Heart left ventricle (tissue), 16 donors: ENCODE measurements at regions of chr1 and their contacts with region 1.

Region 1: GRCh38 chr1:246753670-246754535 is 29.7 kb downstream of the SCCPDH start:
- DNase-seq: peak in 4 of 5 donors; percentile 38 to 49 (median 46)
- ATAC-seq: peak in 3 of 4 donors; percentile 72 to 84 (median 82)
- H3K4me3 ChIP-seq: no peak overlapping the region
- H3K27ac ChIP-seq: no peak overlapping the region
- H3K4me1 ChIP-seq: no peaks in the 10 kb centered on the region
- H3K27me3 ChIP-seq: no peaks in the 10 kb centered on the region
- CTCF ChIP-seq: peak; percentile 56 to 78 (median 72)
- POLR2A ChIP-seq: no peak

Region 2: GRCh38 chr1:246497331-246497915 is 256.5 kb before region 1 on chr1:
- intact Hi-C with region 1: loop called in 8 of 10 experiments (anchors 2 to 10 kb)
- DNase-seq: no peak
- ATAC-seq: peak in 1 of 4 donors; percentile 31
- H3K4me3 ChIP-seq: no peak overlapping the region
- H3K27ac ChIP-seq: no peak overlapping the region
- H3K4me1 ChIP-seq: peaks cover 0 to 3% (median under 1%) of the 10 kb centered on the region in 12 donors
- H3K27me3 ChIP-seq: no peaks in the 10 kb centered on the region
- CTCF ChIP-seq: peak; percentile 61 to 83 (median 72)
- POLR2A ChIP-seq: no peak

Region 3: DNA sequence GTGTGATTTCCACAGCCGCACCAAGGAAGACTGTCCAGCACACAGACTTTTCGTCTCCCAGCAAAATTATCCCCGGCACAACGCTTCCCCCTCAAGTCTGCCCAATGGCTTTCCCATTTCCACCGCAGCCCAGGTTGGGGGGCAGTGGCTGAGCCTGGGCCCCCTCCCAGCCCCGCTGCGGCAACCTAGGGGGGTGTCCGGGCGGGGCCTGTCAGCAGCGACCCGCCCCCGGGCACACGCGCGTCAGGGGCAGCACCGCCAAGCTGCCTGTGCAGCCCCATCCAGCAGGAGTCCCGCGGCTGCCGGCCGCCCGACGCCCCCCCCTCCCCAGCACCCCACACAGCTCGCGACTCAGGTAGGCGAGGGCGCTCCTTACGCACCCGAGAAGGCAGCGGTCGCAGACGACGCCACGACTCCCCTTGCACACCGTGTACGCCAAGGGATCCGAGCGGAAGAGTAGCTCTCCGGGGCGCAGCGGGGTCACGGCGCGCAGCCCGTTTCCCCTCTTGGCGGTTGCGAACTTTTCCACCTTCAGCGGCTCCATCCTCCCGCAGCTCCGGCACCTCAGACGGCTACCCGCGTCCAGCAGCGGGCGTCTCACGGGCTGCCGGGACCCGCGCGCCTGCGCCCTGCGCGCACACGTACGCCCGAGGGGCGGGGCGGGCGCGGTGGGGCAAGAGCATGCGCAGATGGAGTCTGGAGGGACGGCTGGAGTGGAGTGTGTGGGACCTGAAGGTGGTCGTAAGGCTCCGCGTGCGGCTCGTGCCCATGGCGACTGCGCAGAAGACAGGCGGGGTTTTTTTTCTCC is 247.0 kb before region 1 on chr1 and contains the start of gene SMYD3:
- intact Hi-C with region 1: loop called in 2 of 10 experiments (anchors 5 to 10 kb)
- DNase-seq: peak; percentile 72 to 89 (median 83)
- ATAC-seq: peak; percentile 95 to 100 (median 98)
- H3K4me3 ChIP-seq: peak within 1 kb of the TSS; percentile 66 to 90 (median 77)
- H3K27ac ChIP-seq: peak within 1 kb of the TSS in 9 of 12 donors; percentile 27 to 73 (median 57)
- H3K4me1 ChIP-seq: peaks cover 0 to 16% (median 7%) of the 10 kb centered on the region in 12 donors
- H3K27me3 ChIP-seq: no peaks in the 10 kb centered on the region
- CTCF ChIP-seq: peak in 4 of 12 donors; percentile 19 to 44 (median 40)
- POLR2A ChIP-seq: peak in 1 of 2 donors; percentile 78
- total RNA-seq, gene SMYD3: 6.6 to 12.1 (median 9.5) TPM

Region 4: DNA sequence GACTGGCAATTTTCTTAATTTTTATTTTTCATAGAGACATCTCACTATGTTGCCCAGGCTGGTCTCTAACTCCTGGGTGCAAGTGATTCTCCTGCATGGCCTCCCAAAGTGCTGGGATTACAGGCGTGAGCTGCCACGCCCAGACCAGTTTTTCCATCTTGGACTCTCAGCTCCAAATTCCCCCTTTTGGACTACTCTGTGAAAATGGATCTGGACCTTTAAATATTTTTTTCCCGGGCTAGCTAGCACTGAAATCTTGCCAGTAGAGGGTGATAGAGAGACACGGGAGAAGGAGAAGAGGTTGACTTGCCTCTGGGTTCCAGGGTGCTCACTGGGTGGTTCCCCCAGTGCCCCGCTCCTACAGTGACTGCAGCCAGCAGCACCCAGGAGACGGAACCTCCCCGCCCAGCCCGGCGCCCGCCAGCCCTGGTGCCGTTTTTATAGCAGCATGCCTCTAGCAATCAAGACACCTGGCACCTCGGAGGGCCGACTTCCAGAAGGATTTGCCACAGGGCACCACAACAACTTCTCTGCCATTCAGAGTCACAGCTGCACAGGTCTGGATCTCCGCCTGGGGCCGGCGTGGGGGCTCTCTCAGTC is 64.4 kb before region 1 on chr1:
- intact Hi-C with region 1: loop called in 2 of 10 experiments (anchors 1 to 5 kb)
- DNase-seq: peak; percentile 36 to 71 (median 57)
- ATAC-seq: peak; percentile 70 to 90 (median 84)
- H3K4me3 ChIP-seq: peak overlapping the region in 9 of 12 donors; percentile 35 to 60 (median 46)
- H3K27ac ChIP-seq: peak overlapping the region in 6 of 12 donors; percentile 42 to 64 (median 52)
- H3K4me1 ChIP-seq: peaks cover 0 to 19% (median 6%) of the 10 kb centered on the region in 12 donors
- H3K27me3 ChIP-seq: no peaks in the 10 kb centered on the region
- CTCF ChIP-seq: peak; percentile 64 to 86 (median 76)
- POLR2A ChIP-seq: no peak

Region 5: DNA sequence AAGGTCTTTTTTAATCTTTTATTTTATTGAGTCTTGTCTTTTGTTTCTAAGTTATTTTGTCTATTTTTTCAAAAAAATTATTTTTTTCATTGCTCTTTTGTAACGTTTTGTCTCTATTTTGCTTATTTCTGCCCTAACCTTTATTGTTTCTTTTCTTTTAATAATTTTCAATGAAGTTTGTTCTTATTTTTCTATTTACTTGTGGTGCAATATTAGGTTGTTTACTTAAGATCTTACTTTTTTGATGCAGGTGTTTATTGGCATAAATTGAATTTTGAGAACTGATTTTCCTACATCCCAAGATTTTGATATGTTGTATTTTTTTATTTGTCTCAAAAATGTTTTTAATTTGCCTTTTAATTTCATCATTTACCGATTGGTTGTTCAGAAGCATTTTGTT is 931.3 kb after region 1 on chr1:
- intact Hi-C with region 1: no loop called
- DNase-seq: no peak
- ATAC-seq: no peak
- H3K4me3 ChIP-seq: no peak overlapping the region
- H3K27ac ChIP-seq: no peak overlapping the region
- H3K4me1 ChIP-seq: no peaks in the 10 kb centered on the region
- H3K27me3 ChIP-seq: no peaks in the 10 kb centered on the region
- CTCF ChIP-seq: no peak
- POLR2A ChIP-seq: no peak